Mammary epithelial cell (primary cell): ENCODE measurements at regions of chr16 and their contacts with region 1.

Region 1: GRCh38 chr16:2429034-2429770 is at the start of gene CCNF:
- DNase-seq: peak; percentile 92
- H3K4me3 ChIP-seq: peak within 1 kb of the TSS; percentile 72 to 87 (median 86)
- H3K27ac ChIP-seq: peak within 1 kb of the TSS; percentile 46
- H3K4me1 ChIP-seq: peaks cover 18% of the 10 kb centered on the region
- H3K27me3 ChIP-seq: no peaks in the 10 kb centered on the region
- CTCF ChIP-seq: no peak
- total RNA-seq, gene CCNF: 5.7 to 22.7 TPM

Region 2: GRCh38 chr16:2194852-2195321 is 234.3 kb before region 1 on chr16:
- CTCF ChIA-PET with region 1: no interaction called
- dilution Hi-C with region 1: no loop called
- in situ Hi-C with region 1: no loop called
- intact Hi-C with region 1: loop called (anchors 10 kb)
- DNase-seq: peak; percentile 54
- H3K4me3 ChIP-seq: peak overlapping the region in 1 of 3 experiments; percentile 44
- H3K27ac ChIP-seq: no peak overlapping the region
- H3K4me1 ChIP-seq: peaks cover 20% of the 10 kb centered on the region
- H3K27me3 ChIP-seq: no peaks in the 10 kb centered on the region
- CTCF ChIP-seq: peak; percentile 59 to 74

Region 3: DNA sequence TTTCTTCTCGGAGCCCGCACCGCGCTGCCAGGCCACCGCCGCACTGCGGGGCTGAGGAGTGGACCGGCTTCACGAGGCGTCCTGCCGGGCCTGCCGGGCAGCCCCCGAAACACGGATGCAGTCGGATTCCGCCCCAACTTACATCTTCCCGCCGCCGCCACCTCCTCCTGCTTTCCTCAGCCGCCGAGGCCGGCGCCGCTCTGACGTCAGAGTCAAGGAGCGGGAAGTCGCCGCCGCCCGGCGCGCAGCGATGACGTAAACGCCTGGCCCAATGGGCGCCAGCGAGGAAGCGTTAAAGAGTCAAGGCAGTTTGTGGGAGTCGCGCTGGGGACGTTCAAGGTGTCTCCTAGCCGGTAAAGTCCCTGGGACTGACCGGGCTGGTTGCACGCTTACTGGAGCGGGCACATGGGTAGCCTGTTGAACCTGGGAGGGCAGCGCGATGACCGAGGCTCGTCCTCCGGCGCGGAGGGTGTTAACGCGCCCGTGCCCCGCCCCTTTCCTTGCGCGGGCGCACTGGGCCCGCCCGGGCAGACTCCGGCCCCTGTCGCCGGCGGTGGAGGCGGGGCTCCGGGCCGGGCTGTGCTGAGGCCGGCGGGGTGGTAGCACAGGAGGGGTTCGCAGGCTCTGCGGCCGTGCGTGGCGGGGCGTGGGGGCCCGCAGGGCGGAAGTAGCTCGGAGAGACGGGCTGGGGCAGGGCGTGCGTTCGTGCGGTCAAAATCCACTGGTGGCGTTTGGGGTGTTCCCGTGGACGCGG is 161.1 kb before region 1 on chr16 and contains the start of gene RNPS1:
- CTCF ChIA-PET with region 1: no interaction called
- dilution Hi-C with region 1: no loop called
- in situ Hi-C with region 1: no loop called
- intact Hi-C with region 1: loop called (anchors 5 kb)
- DNase-seq: peak; percentile 95
- H3K4me3 ChIP-seq: peak within 1 kb of the TSS; percentile 63 to 90 (median 79)
- H3K27ac ChIP-seq: peak within 1 kb of the TSS; percentile 74
- H3K4me1 ChIP-seq: peaks cover 18% of the 10 kb centered on the region
- H3K27me3 ChIP-seq: no peaks in the 10 kb centered on the region
- CTCF ChIP-seq: no peak
- total RNA-seq, gene RNPS1: 79.4 to 207 TPM

Region 4: DNA sequence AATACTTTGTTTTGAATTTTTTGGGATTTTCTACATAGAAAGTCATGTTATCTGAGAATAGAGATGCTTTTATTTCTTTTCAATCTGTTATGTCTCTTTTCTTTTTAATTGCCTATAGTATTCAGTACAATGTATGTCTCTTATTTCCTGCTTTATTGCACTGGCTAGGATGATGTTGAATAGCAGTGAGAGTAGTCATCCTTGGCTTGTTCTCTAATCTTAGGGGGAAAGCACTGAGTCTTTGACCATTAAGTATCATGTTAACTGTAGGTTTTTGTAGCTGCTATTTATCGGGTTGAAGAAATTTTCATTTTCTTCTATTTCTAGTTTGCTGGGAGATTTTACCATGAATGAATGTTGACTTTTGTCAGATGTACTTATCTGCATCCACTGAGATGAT is 78.7 kb before region 1 on chr16:
- CTCF ChIA-PET with region 1: no interaction called
- dilution Hi-C with region 1: no loop called
- in situ Hi-C with region 1: loop called in 1 of 2 experiments (anchors 10 kb)
- intact Hi-C with region 1: no loop called
- DNase-seq: no peak
- H3K4me3 ChIP-seq: no peak overlapping the region
- H3K27ac ChIP-seq: no peak overlapping the region
- H3K4me1 ChIP-seq: peaks cover 9% of the 10 kb centered on the region
- H3K27me3 ChIP-seq: no peaks in the 10 kb centered on the region
- CTCF ChIP-seq: no peak

Region 5: GRCh38 chr16:2500918-2501750 is 71.9 kb after region 1 on chr16:
- CTCF ChIA-PET with region 1: no interaction called
- dilution Hi-C with region 1: loop called (anchors 5 kb)
- in situ Hi-C with region 1: no loop called
- intact Hi-C with region 1: loop called (anchors 1 kb)
- DNase-seq: peak; percentile 49
- H3K4me3 ChIP-seq: no peak overlapping the region
- H3K27ac ChIP-seq: no peak overlapping the region
- H3K4me1 ChIP-seq: peaks cover 5% of the 10 kb centered on the region
- H3K27me3 ChIP-seq: no peaks in the 10 kb centered on the region
- CTCF ChIP-seq: peak; percentile 84 to 95

Region 6: DNA sequence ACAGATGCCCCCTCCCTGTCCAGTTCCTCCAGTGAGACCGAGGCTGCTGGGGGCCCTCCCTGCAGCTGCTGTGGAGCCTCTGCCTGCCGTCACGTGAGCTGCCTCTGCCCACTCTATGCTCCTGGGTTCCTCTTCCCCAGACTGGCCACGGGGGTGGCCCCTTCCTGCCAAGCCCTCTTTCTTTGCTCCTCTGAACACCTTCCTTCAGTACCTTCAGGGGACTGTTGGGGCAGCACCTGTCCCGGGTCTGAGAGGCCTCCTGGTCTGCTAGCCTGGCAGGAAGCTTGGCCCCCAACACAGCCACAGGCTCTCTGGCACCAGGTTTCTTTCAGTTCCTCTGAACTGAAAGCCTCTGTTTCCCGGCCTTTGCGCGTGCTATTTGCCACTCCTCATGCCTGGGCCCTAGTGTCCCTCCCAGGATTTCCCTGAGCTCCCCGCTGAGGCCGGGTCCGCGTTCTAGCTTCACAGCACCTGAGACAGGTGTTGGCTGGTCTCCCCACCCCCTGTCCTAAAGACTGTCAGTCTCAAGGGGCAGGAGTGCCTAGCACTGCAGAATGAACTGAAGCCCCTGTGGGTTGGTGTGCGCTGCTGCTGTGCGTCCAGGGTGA is 78.0 kb after region 1 on chr16:
- CTCF ChIA-PET with region 1: no interaction called
- dilution Hi-C with region 1: loop called (anchors 5 kb)
- in situ Hi-C with region 1: no loop called
- intact Hi-C with region 1: no loop called
- DNase-seq: no peak
- H3K4me3 ChIP-seq: no peak overlapping the region
- H3K27ac ChIP-seq: no peak overlapping the region
- H3K4me1 ChIP-seq: no peaks in the 10 kb centered on the region
- H3K27me3 ChIP-seq: no peaks in the 10 kb centered on the region
- CTCF ChIP-seq: no peak

Region 7: GRCh38 chr16:3198334-3199072 is 769.3 kb after region 1 on chr16:
- CTCF ChIA-PET with region 1: no interaction called
- dilution Hi-C with region 1: no loop called
- in situ Hi-C with region 1: no loop called
- intact Hi-C with region 1: no loop called
- DNase-seq: no peak
- H3K4me3 ChIP-seq: no peak overlapping the region
- H3K27ac ChIP-seq: no peak overlapping the region
- H3K4me1 ChIP-seq: no peaks in the 10 kb centered on the region
- H3K27me3 ChIP-seq: peaks cover 3% of the 10 kb centered on the region
- CTCF ChIP-seq: no peak